Endothelial cell of umbilical vein (primary cell): ENCODE measurements at regions of chr2 and their contacts with region 1.

Region 1: GRCh38 chr2:27281855-27282559 is at the start of gene TRIM54:
- DNase-seq: no peak
- H3K4me3 ChIP-seq: no peak within 1 kb of the TSS
- H3K27ac ChIP-seq: no peak within 1 kb of the TSS
- H3K4me1 ChIP-seq: peaks cover 6% of the 10 kb centered on the region
- H3K27me3 ChIP-seq: no peaks in the 10 kb centered on the region
- CTCF ChIP-seq: no peak
- POLR2A ChIP-seq: no peak
- total RNA-seq, gene TRIM54: 0.42 and 0.51 TPM in 2 replicates

Region 2: DNA sequence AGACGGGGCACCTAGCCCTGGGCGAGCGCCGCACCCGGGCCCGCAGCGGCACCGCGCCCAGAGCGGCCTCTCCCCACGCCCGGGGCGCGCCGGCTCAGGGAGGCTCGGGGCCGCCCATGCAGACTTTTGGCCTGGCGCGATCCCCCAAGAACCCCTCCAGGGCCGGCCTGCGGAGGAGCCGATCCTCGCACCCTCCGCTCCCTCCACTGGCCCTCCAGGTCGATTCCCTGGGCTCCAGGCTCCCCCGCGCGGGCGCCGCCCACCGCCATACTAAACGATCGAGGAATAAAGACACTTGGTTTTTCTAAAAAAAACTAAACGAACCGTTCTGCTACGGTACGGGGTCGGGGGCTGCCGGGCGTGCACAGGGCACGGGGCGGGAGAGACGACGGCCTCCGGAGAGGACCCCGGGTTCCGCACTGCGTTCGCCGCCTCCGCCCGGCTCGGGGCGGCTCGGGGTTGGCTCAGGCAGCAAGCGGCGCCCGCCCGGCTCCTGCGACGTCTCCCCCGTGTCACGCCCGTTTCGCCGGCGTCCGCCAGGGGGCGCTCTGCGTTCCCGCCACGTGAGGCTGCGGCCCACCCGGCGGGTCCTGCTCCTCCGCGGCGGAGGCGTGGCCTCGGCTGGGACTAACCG is 195.8 kb before region 1 on chr2:
- CTCF ChIA-PET with region 1: interaction called, 12 read pairs
- POLR2A ChIA-PET with region 1: interaction called, 3 read pairs
- dilution Hi-C with region 1: no loop called
- intact Hi-C with region 1: no loop called
- DNase-seq: peak; percentile 94
- H3K4me3 ChIP-seq: peak overlapping the region; percentile 55 to 73 (median 64)
- H3K27ac ChIP-seq: peak overlapping the region; percentile 51
- H3K4me1 ChIP-seq: peaks cover 12% of the 10 kb centered on the region
- H3K27me3 ChIP-seq: no peaks in the 10 kb centered on the region
- CTCF ChIP-seq: peak; percentile 76 to 86
- POLR2A ChIP-seq: peak; percentile 62

Region 3: DNA sequence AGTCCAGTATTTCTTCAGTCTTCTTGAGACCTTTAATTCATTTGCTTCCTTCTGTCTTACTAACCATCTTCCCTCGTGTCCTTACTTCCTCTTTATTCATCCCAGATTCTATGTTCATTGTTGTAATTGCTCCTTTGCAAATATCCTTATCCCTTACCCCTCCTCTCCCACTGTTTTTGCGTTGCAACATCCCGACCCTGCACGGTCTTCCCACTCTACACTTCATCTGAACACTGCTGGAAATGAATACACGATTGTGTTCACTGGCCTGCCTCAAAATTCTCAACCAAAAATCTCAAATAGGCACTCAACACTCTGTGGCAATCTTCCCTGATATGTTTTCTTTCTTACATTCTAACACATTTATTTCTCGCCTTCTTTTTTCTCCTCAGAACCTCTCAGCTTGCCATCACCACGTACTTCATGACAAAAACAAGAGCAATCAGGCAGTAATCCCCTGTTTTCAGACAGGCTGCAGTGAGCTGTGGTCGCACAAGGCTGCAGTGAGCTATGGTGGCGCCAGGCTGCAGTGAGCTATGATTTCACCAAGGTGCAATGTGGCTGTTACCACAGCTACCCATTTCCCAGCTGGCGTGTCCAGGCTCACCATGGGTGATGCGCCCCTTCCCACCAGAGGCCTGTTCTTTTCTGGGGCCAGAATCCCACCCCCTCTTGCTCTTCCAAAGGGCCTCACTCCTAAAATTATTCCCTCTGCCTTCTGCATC is 107.5 kb before region 1 on chr2:
- CTCF ChIA-PET with region 1: interaction called, 16 read pairs
- POLR2A ChIA-PET with region 1: no interaction called
- dilution Hi-C with region 1: no loop called
- intact Hi-C with region 1: no loop called
- DNase-seq: no peak
- H3K4me3 ChIP-seq: no peak overlapping the region
- H3K27ac ChIP-seq: no peak overlapping the region
- H3K4me1 ChIP-seq: no peaks in the 10 kb centered on the region
- H3K27me3 ChIP-seq: peaks cover 30 to 34% of the 10 kb centered on the region in 2 experiments
- CTCF ChIP-seq: no peak
- POLR2A ChIP-seq: no peak

Region 4: DNA sequence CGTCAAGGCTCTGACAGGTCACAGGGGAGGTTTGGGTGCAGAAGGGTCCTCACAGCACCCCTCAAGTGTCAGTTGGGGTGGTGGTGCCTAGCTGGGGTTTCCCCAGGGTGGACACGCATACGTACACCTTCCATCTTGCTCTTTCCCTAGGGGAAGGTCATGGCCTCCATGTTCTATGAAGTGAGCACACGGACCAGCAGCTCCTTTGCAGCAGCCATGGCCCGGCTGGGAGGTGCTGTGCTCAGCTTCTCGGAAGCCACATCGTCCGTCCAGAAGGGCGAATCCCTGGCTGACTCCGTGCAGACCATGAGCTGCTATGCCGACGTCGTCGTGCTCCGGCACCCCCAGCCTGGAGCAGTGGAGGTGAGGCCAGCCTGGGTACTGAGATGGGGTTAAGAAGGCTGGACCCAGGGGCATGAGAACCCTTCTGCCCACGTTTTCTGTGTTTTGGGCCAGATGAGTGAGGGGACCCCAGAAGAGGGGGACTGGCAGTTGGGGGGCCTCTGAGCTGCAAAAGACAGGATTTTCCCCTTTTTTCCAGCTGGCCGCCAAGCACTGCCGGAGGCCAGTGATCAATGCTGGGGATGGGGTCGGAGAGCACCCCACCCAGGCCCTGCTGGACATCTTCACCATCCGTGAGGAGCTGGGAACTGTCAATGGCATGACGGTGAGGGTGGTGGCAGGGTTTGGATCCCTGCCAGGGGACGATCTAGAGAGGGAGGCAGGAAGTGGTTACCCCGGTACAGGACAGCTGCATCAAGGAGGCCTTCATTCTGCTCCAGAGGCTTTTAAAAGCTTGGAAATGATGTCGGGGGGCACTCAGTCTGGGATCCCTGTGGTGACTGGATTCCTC is 40.0 kb before region 1 on chr2:
- CTCF ChIA-PET with region 1: interaction called, 17 read pairs
- POLR2A ChIA-PET with region 1: no interaction called
- dilution Hi-C with region 1: no loop called
- intact Hi-C with region 1: no loop called
- DNase-seq: no peak
- H3K4me3 ChIP-seq: no peak overlapping the region
- H3K27ac ChIP-seq: no peak overlapping the region
- H3K4me1 ChIP-seq: no peaks in the 10 kb centered on the region
- H3K27me3 ChIP-seq: no peaks in the 10 kb centered on the region
- CTCF ChIP-seq: no peak
- POLR2A ChIP-seq: no peak

Region 5: DNA sequence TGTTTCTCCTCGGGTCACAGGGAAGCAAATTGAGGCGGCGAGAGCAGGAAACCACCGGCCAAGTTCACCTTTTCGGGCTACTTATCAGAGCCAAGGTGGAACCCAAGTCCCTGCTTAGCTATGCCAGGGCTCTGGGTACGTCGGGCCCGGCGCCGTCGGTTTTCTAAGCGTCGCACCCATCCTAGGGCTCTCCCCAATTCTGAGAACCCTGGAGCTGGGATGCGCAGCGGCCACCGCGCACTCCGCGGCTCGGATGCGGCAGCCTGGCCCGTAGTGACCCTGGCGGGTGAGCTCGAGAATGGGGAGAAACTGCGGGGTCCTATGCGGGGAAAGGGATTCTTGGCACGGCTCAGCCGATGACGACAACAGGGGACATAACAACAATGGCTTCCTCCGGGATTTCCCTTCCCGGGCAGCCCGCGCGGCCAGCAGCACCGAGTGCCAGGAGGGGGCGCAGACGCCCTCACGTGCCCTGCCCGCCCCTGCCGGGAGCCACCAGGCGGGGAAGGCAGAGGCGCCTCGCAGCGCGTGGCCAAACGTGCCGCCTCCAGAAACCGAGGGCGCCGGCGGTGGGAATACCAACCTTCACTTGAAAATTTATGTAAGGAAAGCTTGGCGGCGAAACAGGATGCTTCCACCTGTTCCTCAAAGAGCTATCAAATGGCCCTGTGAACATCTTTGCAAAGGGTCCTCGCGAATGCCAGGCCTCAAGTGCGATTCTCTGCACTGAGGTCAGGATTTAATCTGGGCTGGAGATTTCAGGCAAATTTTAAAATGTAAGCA is 17.1 kb before region 1 on chr2:
- CTCF ChIA-PET with region 1: interaction called, 143 read pairs
- POLR2A ChIA-PET with region 1: interaction called, 8 read pairs
- dilution Hi-C with region 1: no loop called
- intact Hi-C with region 1: loop called (anchors 1 kb)
- DNase-seq: peak; percentile 87
- H3K4me3 ChIP-seq: peak overlapping the region in 2 of 3 experiments; percentile 32 to 82
- H3K27ac ChIP-seq: no peak overlapping the region
- H3K4me1 ChIP-seq: peaks cover 22% of the 10 kb centered on the region
- H3K27me3 ChIP-seq: peaks cover 19 to 42% of the 10 kb centered on the region in 2 experiments
- CTCF ChIP-seq: peak; percentile 90 to 93
- POLR2A ChIP-seq: no peak